Cardiac septum (tissue), 1 donor: ENCODE measurements at regions of chr6 and their contacts with region 1.

Region 1: GRCh38 chr6:169520104-169520503 is 181.7 kb downstream of the WDR27 start:
- DNase-seq: no peak

Region 2: DNA sequence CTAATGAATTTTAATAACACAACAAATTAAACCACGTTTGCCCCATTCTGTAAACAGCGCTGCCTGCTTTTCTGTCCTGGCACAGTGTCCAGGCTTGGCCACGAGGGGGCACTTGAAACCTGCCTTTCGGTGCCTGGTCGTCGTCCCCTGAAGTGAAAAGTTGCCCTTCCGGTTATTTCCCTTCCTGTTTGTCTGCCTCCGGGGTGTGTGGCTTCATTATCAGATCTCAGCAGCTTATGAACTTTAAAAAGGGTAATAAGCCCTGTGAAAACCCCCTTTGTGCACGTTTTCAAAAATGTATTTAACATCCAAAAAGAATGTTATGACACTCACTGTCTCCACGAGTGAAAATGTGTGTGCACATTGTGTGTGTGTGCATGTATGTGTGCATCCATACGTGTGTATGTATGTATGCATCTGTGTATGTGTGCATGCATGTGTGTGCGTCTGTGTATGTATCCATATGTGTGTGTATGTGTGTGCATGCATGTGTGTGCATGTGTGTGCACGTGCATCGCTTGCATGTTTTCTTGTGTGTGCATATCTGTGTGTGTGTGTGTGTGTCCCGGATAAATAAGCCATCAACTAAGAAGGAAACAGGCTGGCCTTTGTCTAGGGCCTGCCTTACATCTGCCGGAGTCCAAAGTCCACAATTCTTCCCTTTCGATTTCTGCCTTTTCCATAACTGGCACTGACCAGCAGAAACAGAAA is 624.8 kb before region 1 on chr6:
- intact Hi-C with region 1: loop called (anchors 2 kb)
- DNase-seq: peak; percentile 82

Region 3: GRCh38 chr6:169604076-169604475 is 84.0 kb after region 1 on chr6:
- intact Hi-C with region 1: no loop called
- DNase-seq: no peak